Activated T-helper 2 cell treated with anti-CD3 and anti-CD28 coated beads, Interferon-gamma antibody, Interleukin-2, Interleukin-4, amounts not matched to agents 10 μg/mL and 5 μg/mL and 100 μg/mL, durations not matched to agents 14 hours and 24 hours and 36 hours (primary cell): ENCODE measurements at regions of chr7 and their contacts with region 1.

Region 1: GRCh38 chr7:143008007-143008901 is 18.7 kb downstream of the OR9A2 start:
- DNase-seq: peak; percentile 62
- H3K4me3 Mint-ChIP-seq: no peak overlapping the region
- H3K27ac Mint-ChIP-seq: no peak overlapping the region
- H3K4me1 Mint-ChIP-seq: peaks cover 2% of the 10 kb centered on the region
- H3K27me3 Mint-ChIP-seq: peaks cover 33% of the 10 kb centered on the region

Region 2: DNA sequence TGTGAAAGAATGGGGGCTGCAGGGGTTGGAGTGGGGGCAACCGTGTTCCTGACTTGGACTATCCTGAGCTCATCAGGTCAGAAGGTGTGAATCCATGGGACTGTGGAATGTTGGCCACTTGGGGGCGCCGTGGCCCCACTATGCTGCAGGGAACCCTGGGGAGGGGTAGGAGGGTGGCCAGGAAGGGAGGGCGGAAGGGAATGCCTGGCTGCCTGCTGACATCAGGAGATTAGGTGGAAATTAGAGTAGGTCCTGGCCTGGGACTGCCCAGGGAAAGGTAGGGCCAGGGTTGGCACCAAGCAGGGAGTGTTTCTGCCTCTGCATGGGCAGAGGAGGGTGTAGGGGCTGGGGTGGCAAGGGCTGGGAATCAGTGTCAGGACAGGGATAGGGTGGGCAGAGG is 684.5 kb before region 1 on chr7:
- intact Hi-C with region 1: loop called (anchors 5 kb)
- DNase-seq: no peak
- H3K4me3 Mint-ChIP-seq: no peak overlapping the region
- H3K27ac Mint-ChIP-seq: no peak overlapping the region
- H3K4me1 Mint-ChIP-seq: peaks cover 4% of the 10 kb centered on the region
- H3K27me3 Mint-ChIP-seq: peaks cover 18% of the 10 kb centered on the region

Region 3: GRCh38 chr7:142603870-142604448 is 404.3 kb before region 1 on chr7:
- intact Hi-C with region 1: loop called (anchors 5 kb)
- DNase-seq: peak; percentile 22
- H3K4me3 Mint-ChIP-seq: no peak overlapping the region
- H3K27ac Mint-ChIP-seq: no peak overlapping the region
- H3K4me1 Mint-ChIP-seq: peaks cover 9% of the 10 kb centered on the region
- H3K27me3 Mint-ChIP-seq: peaks cover 26% of the 10 kb centered on the region

Region 4: GRCh38 chr7:143287935-143288826 is 279.9 kb after region 1 on chr7 and contains the start of gene CASP2:
- intact Hi-C with region 1: loop called (anchors 5 kb)
- DNase-seq: peak; percentile 99
- H3K4me3 Mint-ChIP-seq: peak within 1 kb of the TSS; percentile 95
- H3K27ac Mint-ChIP-seq: peak within 1 kb of the TSS; percentile 87
- H3K4me1 Mint-ChIP-seq: peaks cover 47% of the 10 kb centered on the region
- H3K27me3 Mint-ChIP-seq: no peaks in the 10 kb centered on the region
- total RNA-seq, gene CASP2: 116 and 122 TPM in 2 replicates